AG04450 (cell line): ENCODE measurements at regions of chr3 and their contacts with region 1.

Region 1: GRCh38 chr3:169149349-169149890 is 514.1 kb downstream of the MECOM start:
- DNase-seq: peak; percentile 62
- H3K4me3 ChIP-seq: peak overlapping the region; percentile 63
- H3K27ac ChIP-seq: peak overlapping the region; percentile 49
- H3K27me3 ChIP-seq: no peaks in the 10 kb centered on the region
- CTCF ChIP-seq: peak; percentile 85

Region 2: DNA sequence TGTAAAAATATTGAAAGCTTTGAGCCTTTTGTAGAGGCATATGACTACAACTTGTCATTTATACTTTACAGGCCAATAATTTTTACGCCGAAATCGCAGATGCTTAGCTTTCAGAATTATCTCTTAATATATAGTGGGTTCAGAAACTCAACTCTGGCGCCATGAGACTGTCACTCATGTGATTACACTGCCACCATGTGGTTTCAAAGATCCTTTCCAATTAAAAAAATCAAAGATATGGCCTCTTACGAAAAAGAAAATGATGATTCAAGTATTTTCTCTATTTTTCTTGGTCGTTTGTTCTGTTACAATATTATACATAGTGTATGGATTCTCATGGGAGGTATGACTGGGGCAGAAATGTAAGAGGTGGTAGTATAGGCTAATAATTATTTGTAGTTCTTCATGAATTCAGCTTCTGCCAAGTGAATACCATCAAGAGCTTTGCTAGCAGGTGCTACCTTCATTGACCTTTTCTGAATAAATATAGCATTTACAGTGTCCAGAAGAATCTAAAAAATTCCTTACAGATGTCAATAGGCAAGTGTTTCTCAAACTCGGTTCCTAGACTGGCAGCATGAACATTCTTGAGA is 302.0 kb before region 1 on chr3:
- CTCF ChIA-PET with region 1: no interaction called
- POLR2A ChIA-PET with region 1: no interaction called
- DNase-seq: peak; percentile 2
- H3K4me3 ChIP-seq: no peak overlapping the region
- H3K27ac ChIP-seq: no peak overlapping the region
- H3K27me3 ChIP-seq: peaks cover 3% of the 10 kb centered on the region
- CTCF ChIP-seq: peak; percentile 74

Region 3: DNA sequence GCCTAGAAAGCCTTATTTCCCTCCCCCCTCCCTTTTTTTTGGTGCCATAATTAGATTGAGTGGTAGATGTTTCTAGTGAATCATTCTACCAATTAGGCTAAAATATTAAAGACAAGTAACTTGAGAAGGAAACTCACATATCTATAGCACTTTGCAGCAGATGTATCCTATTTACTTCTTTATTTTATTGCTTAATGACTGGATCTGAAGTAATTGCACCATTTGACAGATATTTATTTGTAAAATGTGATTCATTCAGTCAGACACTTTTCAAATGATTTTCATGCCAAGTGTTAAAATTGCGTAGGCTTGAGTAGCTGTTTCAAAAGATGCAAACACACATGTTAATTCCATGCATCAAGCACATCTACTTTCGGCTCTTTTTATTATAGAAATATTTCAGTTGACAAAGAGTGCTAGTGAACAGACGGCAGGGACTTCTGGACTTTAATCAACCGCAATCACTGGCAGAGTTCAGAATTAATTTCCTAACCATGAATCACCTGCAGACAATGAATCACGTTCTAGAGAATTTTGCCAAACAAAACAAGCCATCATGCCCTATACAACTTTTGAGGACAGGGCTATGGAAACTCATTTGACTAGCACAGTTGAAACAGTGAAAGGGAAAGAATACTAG is 122.8 kb before region 1 on chr3:
- CTCF ChIA-PET with region 1: interaction called, 15 read pairs
- POLR2A ChIA-PET with region 1: interaction called, 3 read pairs
- DNase-seq: peak; percentile 66
- H3K4me3 ChIP-seq: peak overlapping the region; percentile 29
- H3K27ac ChIP-seq: no peak overlapping the region
- H3K27me3 ChIP-seq: no peaks in the 10 kb centered on the region
- CTCF ChIP-seq: no peak

Region 4: DNA sequence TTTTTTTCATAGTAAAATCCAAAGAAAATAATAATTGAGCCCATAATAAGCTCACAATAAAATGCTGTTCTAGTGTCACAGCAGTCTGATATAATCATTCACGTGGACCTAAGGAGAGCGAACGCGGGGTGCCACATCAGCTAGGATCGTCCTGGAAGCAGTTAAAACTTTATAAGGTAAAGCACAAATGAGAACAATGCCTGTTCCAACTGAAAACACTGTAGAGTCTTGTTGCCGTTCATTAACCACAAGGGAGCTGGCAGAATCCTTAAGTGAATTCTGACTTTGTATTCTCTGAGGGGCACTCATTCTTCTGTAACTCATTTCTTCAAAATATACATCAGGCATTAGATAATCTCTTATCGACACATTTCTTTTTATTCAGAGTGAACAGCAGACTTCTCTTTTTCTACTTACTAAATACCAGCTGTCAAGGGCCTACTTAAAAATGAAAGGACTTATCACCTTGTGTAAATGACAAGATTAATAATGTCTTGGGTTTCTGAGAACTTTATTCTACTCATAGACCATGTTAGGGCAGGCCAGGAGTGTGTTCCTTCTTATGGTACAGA is 10.5 kb before region 1 on chr3:
- CTCF ChIA-PET with region 1: interaction called, 18 read pairs
- POLR2A ChIA-PET with region 1: no interaction called
- DNase-seq: no peak
- H3K4me3 ChIP-seq: no peak overlapping the region
- H3K27ac ChIP-seq: no peak overlapping the region
- H3K27me3 ChIP-seq: no peaks in the 10 kb centered on the region
- CTCF ChIP-seq: no peak

Region 5: GRCh38 chr3:169295126-169295525 is 145.7 kb after region 1 on chr3:
- CTCF ChIA-PET with region 1: interaction called, 23 read pairs
- POLR2A ChIA-PET with region 1: interaction called, 6 read pairs
- DNase-seq: no peak
- H3K4me3 ChIP-seq: no peak overlapping the region
- H3K27ac ChIP-seq: no peak overlapping the region
- H3K27me3 ChIP-seq: no peaks in the 10 kb centered on the region
- CTCF ChIP-seq: peak; percentile 58

Region 6: GRCh38 chr3:169345662-169346331 is 196.4 kb after region 1 on chr3:
- CTCF ChIA-PET with region 1: no interaction called
- POLR2A ChIA-PET with region 1: no interaction called
- DNase-seq: no peak
- H3K4me3 ChIP-seq: no peak overlapping the region
- H3K27ac ChIP-seq: no peak overlapping the region
- H3K27me3 ChIP-seq: no peaks in the 10 kb centered on the region
- CTCF ChIP-seq: no peak

Region 7: DNA sequence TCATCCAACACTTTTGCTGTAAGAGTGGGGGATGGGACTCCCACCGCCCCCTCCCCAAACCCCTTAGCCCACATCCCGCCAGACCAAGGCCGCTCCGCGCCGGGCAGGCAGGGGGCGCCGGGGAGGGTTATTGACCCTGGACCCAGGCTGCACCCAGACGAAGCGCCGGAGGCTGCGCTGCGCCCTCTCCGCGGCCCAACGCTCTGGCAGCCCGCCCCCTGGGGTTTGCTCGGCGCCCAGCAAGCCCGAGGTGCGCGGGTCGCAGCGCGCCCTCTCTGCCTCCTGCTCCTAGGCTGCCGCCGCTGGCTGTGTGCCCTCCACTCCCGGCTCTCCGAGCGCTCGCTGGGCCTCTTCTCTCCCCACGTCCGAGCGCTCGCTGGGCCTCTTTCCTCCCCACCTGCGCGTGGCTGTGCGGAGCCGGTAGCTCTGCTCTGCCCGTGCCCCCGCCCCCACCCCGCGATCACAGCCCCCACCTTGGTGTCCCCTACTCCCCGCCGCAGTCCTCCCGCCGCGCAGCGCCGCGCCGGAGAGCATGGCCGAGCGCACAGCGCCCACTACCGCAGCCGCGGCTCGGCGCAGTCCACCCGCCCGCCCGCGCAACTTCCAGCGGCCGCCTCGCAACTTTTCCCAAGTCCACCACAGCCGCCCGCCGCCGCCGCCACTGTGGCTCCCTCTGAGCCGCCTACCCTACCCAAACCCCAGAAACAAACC is 512.9 kb after region 1 on chr3:
- CTCF ChIA-PET with region 1: interaction called, 84 read pairs
- POLR2A ChIA-PET with region 1: no interaction called
- DNase-seq: no peak
- H3K4me3 ChIP-seq: peak overlapping the region; percentile 69
- H3K27ac ChIP-seq: no peak overlapping the region
- H3K27me3 ChIP-seq: peaks cover 56% of the 10 kb centered on the region
- CTCF ChIP-seq: peak; percentile 44

Region 8: GRCh38 chr3:169764452-169765274 is 615.2 kb after region 1 on chr3 and contains the start of gene TERC:
- CTCF ChIA-PET with region 1: interaction called, 12 read pairs
- POLR2A ChIA-PET with region 1: no interaction called
- DNase-seq: peak; percentile 69
- H3K4me3 ChIP-seq: peak within 1 kb of the TSS; percentile 83
- H3K27ac ChIP-seq: peak within 1 kb of the TSS; percentile 88
- H3K27me3 ChIP-seq: no peaks in the 10 kb centered on the region
- CTCF ChIP-seq: no peak
- polyA plus RNA-seq, gene TERC: not detected in 2 replicates